ENCODE measurements at regions of chr12 and their contacts with region 1.

Region 1: GRCh38 chr12:92987362-92987761 is 58.3 kb upstream of the EEA1 start:
- DNase-seq: peak; percentile 82
- H3K4me3 ChIP-seq: no peak overlapping the region
- H3K27ac ChIP-seq: no peak overlapping the region
- H3K4me1 ChIP-seq: peaks cover 4% of the 10 kb centered on the region
- H3K27me3 ChIP-seq: no peaks in the 10 kb centered on the region
- CTCF ChIP-seq: peak; percentile 28 to 30
- POLR2A ChIP-seq: no peak

Region 2: GRCh38 chr12:92784795-92785562 is 202.4 kb before region 1 on chr12:
- CTCF ChIA-PET with region 1: interaction called, 28 read pairs
- POLR2A ChIA-PET with region 1: no interaction called
- dilution Hi-C with region 1: no loop called
- intact Hi-C with region 1: loop called (anchors 1 kb)
- DNase-seq: peak; percentile 90
- H3K4me3 ChIP-seq: no peak overlapping the region
- H3K27ac ChIP-seq: no peak overlapping the region
- H3K4me1 ChIP-seq: no peaks in the 10 kb centered on the region
- H3K27me3 ChIP-seq: no peaks in the 10 kb centered on the region
- CTCF ChIP-seq: peak; percentile 26 to 28
- POLR2A ChIP-seq: no peak

Region 3: GRCh38 chr12:93002293-93003054 is 15.1 kb after region 1 on chr12:
- CTCF ChIA-PET with region 1: interaction called, 19 read pairs
- POLR2A ChIA-PET with region 1: interaction called, 5 read pairs
- dilution Hi-C with region 1: no loop called
- intact Hi-C with region 1: no loop called
- DNase-seq: peak; percentile 99
- H3K4me3 ChIP-seq: no peak overlapping the region
- H3K27ac ChIP-seq: peak overlapping the region; percentile 95
- H3K4me1 ChIP-seq: peaks cover 26% of the 10 kb centered on the region
- H3K27me3 ChIP-seq: no peaks in the 10 kb centered on the region
- CTCF ChIP-seq: no peak
- POLR2A ChIP-seq: no peak

Region 4: GRCh38 chr12:93025145-93025805 is 37.9 kb after region 1 on chr12:
- CTCF ChIA-PET with region 1: interaction called, 13 read pairs
- POLR2A ChIA-PET with region 1: no interaction called
- dilution Hi-C with region 1: no loop called
- intact Hi-C with region 1: loop called (anchors 1 kb)
- DNase-seq: peak; percentile 79
- H3K4me3 ChIP-seq: no peak overlapping the region
- H3K27ac ChIP-seq: no peak overlapping the region
- H3K4me1 ChIP-seq: peaks cover 10% of the 10 kb centered on the region
- H3K27me3 ChIP-seq: no peaks in the 10 kb centered on the region
- CTCF ChIP-seq: peak; percentile 37 to 40
- POLR2A ChIP-seq: no peak

Region 5: GRCh38 chr12:93378373-93379325 is 391.3 kb after region 1 on chr12:
- CTCF ChIA-PET with region 1: interaction called, 87 read pairs
- POLR2A ChIA-PET with region 1: no interaction called
- dilution Hi-C with region 1: no loop called
- intact Hi-C with region 1: loop called (anchors 1 kb)
- DNase-seq: peak; percentile 52
- H3K4me3 ChIP-seq: peak overlapping the region; percentile 71 to 99 (median 95)
- H3K27ac ChIP-seq: peak overlapping the region; percentile 79
- H3K4me1 ChIP-seq: peaks cover 29% of the 10 kb centered on the region
- H3K27me3 ChIP-seq: no peaks in the 10 kb centered on the region
- CTCF ChIP-seq: no peak
- POLR2A ChIP-seq: no peak

Region 6: DNA sequence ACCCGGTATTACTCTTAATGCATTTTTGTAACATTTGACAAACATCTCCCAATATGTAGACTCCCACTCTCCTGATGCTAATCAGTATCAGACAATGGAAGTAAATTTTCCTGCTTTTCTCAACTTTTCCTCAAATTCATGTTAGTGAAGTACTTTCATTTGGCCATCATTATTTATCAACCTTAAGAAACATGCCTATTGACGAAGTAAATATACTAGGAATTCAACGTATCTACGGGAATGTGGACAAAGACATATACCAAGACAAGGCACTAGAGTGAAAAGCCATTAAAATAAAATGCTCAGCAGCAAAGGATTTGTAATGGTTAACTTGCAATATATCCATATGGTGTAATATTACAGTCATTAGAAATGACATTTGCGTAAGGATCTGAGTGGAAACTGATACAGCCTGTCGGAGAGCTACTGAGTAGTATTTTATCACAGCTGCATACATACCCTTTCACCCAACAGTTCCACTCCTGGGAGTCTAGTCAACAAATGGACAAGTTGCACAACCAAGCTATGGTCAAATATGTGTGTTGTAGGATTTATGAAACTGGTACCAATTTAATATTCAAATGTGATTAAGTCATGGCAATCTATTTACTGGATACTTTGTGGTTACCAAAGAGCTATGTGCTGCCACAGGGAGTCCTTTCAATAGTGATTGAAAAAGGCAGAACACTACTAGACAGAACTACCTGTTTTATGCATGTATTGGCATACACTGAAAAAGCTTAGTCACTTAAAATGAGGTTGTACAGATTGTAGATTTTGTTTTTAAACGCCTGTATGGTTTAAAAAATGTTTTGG is 416.8 kb after region 1 on chr12:
- CTCF ChIA-PET with region 1: interaction called, 79 read pairs
- POLR2A ChIA-PET with region 1: no interaction called
- dilution Hi-C with region 1: no loop called
- intact Hi-C with region 1: no loop called
- DNase-seq: no peak
- H3K4me3 ChIP-seq: no peak overlapping the region
- H3K27ac ChIP-seq: no peak overlapping the region
- H3K4me1 ChIP-seq: peaks cover 5% of the 10 kb centered on the region
- H3K27me3 ChIP-seq: no peaks in the 10 kb centered on the region
- CTCF ChIP-seq: no peak
- POLR2A ChIP-seq: no peak

Measured in endothelial cell of umbilical vein (primary cell).